ENCODE measurements at regions of chr21 and their contacts with region 1.

Region 1: GRCh38 chr21:33479679-33480480 is at the start of gene TMEM50B:
- DNase-seq: peak; percentile 99
- ATAC-seq: peak; percentile 97
- H3K4me3 Mint-ChIP-seq: peak within 1 kb of the TSS; percentile 83
- H3K27ac Mint-ChIP-seq: peak within 1 kb of the TSS; percentile 88
- H3K4me1 Mint-ChIP-seq: peaks cover 17% of the 10 kb centered on the region
- H3K27me3 Mint-ChIP-seq: no peaks in the 10 kb centered on the region
- total RNA-seq, gene TMEM50B: 13.6 to 15.2 TPM

Region 2: GRCh38 chr21:32770871-32771523 is 708.9 kb before region 1 on chr21:
- CTCF ChIA-PET with region 1: no interaction called
- POLR2A ChIA-PET with region 1: interaction called, 6 read pairs
- intact Hi-C with region 1: loop called in 1 of 2 experiments (anchors 1 kb)
- DNase-seq: peak; percentile 76
- ATAC-seq: peak; percentile 17
- H3K4me3 Mint-ChIP-seq: peak overlapping the region; percentile 99
- H3K27ac Mint-ChIP-seq: peak overlapping the region; percentile 96
- H3K4me1 Mint-ChIP-seq: peaks cover 54% of the 10 kb centered on the region
- H3K27me3 Mint-ChIP-seq: no peaks in the 10 kb centered on the region

Region 3: DNA sequence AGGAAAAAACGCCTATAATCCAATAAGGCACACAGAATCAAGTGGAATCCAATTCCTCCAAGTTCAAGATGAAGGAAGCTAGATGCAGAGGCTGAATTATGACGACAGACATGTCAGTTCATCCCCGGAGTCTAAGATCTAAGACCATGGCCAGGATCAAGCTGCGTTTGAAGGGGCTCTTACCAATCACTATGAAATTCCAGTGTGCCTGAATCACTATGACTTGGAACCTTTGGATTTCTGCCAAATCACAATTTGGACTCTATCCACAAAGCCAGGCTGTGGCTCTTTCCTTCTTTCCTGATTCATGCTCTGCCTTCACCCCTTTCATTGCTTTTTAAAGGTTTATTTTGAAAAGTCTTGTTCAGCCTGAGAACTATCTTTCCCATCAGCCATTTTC is 437.1 kb before region 1 on chr21:
- CTCF ChIA-PET with region 1: no interaction called
- POLR2A ChIA-PET with region 1: no interaction called
- intact Hi-C with region 1: no loop called
- DNase-seq: no peak
- ATAC-seq: no peak
- H3K4me3 Mint-ChIP-seq: no peak overlapping the region
- H3K27ac Mint-ChIP-seq: no peak overlapping the region
- H3K4me1 Mint-ChIP-seq: no peaks in the 10 kb centered on the region
- H3K27me3 Mint-ChIP-seq: peaks cover 22% of the 10 kb centered on the region

Region 4: GRCh38 chr21:33403779-33404585 is 75.9 kb before region 1 on chr21:
- CTCF ChIA-PET with region 1: no interaction called
- POLR2A ChIA-PET with region 1: no interaction called
- intact Hi-C with region 1: loop called in 1 of 2 experiments (anchors 2 kb)
- DNase-seq: peak; percentile 55
- ATAC-seq: peak; percentile 36
- H3K4me3 Mint-ChIP-seq: peak overlapping the region; percentile 86
- H3K27ac Mint-ChIP-seq: peak overlapping the region; percentile 89
- H3K4me1 Mint-ChIP-seq: peaks cover 40% of the 10 kb centered on the region
- H3K27me3 Mint-ChIP-seq: peaks cover 7% of the 10 kb centered on the region

Region 5: GRCh38 chr21:33491373-33492102 is 11.7 kb after region 1 on chr21 and contains the start of gene DNAJC28:
- CTCF ChIA-PET with region 1: interaction called, 17 read pairs
- POLR2A ChIA-PET with region 1: interaction called, 43 read pairs
- intact Hi-C with region 1: loop called (anchors 1 kb)
- DNase-seq: peak; percentile 95
- ATAC-seq: peak; percentile 99
- H3K4me3 Mint-ChIP-seq: peak within 1 kb of the TSS; percentile 87
- H3K27ac Mint-ChIP-seq: peak within 1 kb of the TSS; percentile 91
- H3K4me1 Mint-ChIP-seq: peaks cover 9% of the 10 kb centered on the region
- H3K27me3 Mint-ChIP-seq: no peaks in the 10 kb centered on the region
- total RNA-seq, gene DNAJC28: 0.37 to 0.43 TPM

Region 6: GRCh38 chr21:33588485-33589335 is 108.8 kb after region 1 on chr21 and contains the start of gene DONSON:
- CTCF ChIA-PET with region 1: interaction called, 3 read pairs
- POLR2A ChIA-PET with region 1: interaction called, 5 read pairs
- intact Hi-C with region 1: loop called in 1 of 2 experiments (anchors 1 kb)
- DNase-seq: peak; percentile 93
- ATAC-seq: peak; percentile 92
- H3K4me3 Mint-ChIP-seq: peak within 1 kb of the TSS; percentile 91
- H3K27ac Mint-ChIP-seq: peak within 1 kb of the TSS; percentile 87
- H3K4me1 Mint-ChIP-seq: peaks cover 19% of the 10 kb centered on the region
- H3K27me3 Mint-ChIP-seq: no peaks in the 10 kb centered on the region
- total RNA-seq, gene DONSON: 39.5 to 41.8 TPM